Right lobe of liver (tissue), 6 donors: ENCODE measurements at regions of chr2 and their contacts with region 1.

Region 1: GRCh38 chr2:20642055-20642971 is 8.6 kb downstream of the HS1BP3 start:
- DNase-seq: peak; percentile 79 to 81 (median 80)
- ATAC-seq: peak; percentile 92 to 94 (median 94)
- H3K4me3 ChIP-seq: no peak overlapping the region
- H3K27ac ChIP-seq: no peak overlapping the region
- H3K4me1 ChIP-seq: peaks cover 0 to 5% (median 1%) of the 10 kb centered on the region in 4 donors
- H3K27me3 ChIP-seq: no peaks in the 10 kb centered on the region
- CTCF ChIP-seq: peak; percentile 91 to 96 (median 94)
- POLR2A ChIP-seq: no peak

Region 2: DNA sequence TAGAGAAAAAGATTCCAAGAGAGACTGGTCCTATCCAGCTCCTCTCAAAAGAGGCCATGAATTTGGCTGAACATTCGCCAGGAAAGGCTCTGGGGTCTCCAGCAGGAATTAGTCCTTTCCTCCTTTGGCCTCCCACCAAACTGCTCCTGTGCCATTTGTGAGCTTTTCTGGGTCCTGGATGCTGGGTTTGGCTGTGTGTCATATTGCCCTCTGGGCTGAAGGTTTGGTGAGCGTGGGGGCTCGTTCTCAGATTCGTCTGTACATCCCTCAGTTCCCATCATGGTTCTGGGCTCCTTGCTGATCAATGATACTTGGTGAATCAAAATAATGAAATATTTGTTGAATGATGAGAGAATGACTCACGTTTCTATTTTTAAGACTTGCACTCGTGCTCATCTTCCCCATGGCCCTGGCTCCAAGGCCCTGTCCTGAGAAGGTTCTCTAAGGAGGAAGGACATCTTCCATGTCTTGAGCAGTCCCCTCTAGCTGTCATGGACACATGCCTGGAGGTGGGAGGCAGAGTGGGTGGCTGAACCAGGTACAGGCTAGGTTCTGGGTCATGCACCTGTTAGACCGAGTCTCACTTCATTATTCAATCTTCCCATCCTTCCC is 243.3 kb before region 1 on chr2:
- intact Hi-C with region 1: loop called in 1 of 2 experiments (anchors 5 kb)
- DNase-seq: peak in 1 of 3 donors; percentile 24
- ATAC-seq: no peak
- H3K4me3 ChIP-seq: no peak overlapping the region
- H3K27ac ChIP-seq: no peak overlapping the region
- H3K4me1 ChIP-seq: peaks cover 0 to 9% (median 3%) of the 10 kb centered on the region in 4 donors
- H3K27me3 ChIP-seq: no peaks in the 10 kb centered on the region
- CTCF ChIP-seq: no peak
- POLR2A ChIP-seq: no peak

Region 3: DNA sequence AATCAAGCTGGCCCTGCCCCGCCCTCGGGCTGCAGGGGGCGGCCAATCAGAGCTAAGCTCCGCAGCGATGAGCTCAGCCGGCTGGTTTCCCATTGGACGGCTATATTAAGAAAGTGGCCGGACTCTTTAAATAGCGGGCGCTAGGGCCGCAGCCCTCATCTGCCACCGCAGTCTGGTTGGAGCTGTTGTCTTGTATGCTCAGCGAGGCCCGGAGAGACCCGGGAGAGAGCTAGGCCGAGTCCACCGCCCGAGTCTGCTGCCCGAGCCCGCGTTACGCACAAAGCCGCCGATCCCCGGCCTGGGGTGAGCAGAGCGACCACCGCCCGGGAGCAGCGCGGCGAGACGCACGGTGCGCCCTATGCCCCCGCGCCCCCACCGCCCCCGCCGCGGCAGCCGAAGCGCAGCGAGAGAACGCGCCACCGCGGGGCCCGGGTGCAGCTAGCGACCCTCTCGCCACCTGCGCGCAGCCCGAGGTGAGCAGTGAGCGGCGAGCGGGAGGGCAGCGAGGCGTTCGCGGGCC is 195.3 kb before region 1 on chr2 and contains the start of gene RHOB:
- intact Hi-C with region 1: loop called in 1 of 2 experiments (anchors 5 kb)
- DNase-seq: peak; percentile 98 to 99 (median 98)
- ATAC-seq: peak; percentile 76 to 86 (median 78)
- H3K4me3 ChIP-seq: peak within 1 kb of the TSS; percentile 67 to 99 (median 90)
- H3K27ac ChIP-seq: peak within 1 kb of the TSS; percentile 98 to 100 (median 99)
- H3K4me1 ChIP-seq: peaks cover 0 to 42% (median 5%) of the 10 kb centered on the region in 4 donors
- H3K27me3 ChIP-seq: no peaks in the 10 kb centered on the region
- CTCF ChIP-seq: no peak
- POLR2A ChIP-seq: peak; percentile 100
- total RNA-seq, gene RHOB: 185 to 656 (median 388) TPM

Region 4: GRCh38 chr2:20466417-20466911 is 175.8 kb before region 1 on chr2:
- intact Hi-C with region 1: no loop called
- DNase-seq: no peak
- ATAC-seq: peak in 2 of 4 donors; percentile 19 to 24
- H3K4me3 ChIP-seq: no peak overlapping the region
- H3K27ac ChIP-seq: no peak overlapping the region
- H3K4me1 ChIP-seq: peaks cover 0 to 12% (median 4%) of the 10 kb centered on the region in 4 donors
- H3K27me3 ChIP-seq: no peaks in the 10 kb centered on the region
- CTCF ChIP-seq: no peak
- POLR2A ChIP-seq: no peak

Region 5: GRCh38 chr2:20507166-20507692 is 135.1 kb before region 1 on chr2:
- intact Hi-C with region 1: no loop called
- DNase-seq: no peak
- ATAC-seq: peak in 1 of 4 donors; percentile 13
- H3K4me3 ChIP-seq: no peak overlapping the region
- H3K27ac ChIP-seq: no peak overlapping the region
- H3K4me1 ChIP-seq: no peaks in the 10 kb centered on the region
- H3K27me3 ChIP-seq: no peaks in the 10 kb centered on the region
- CTCF ChIP-seq: no peak
- POLR2A ChIP-seq: no peak

Region 6: DNA sequence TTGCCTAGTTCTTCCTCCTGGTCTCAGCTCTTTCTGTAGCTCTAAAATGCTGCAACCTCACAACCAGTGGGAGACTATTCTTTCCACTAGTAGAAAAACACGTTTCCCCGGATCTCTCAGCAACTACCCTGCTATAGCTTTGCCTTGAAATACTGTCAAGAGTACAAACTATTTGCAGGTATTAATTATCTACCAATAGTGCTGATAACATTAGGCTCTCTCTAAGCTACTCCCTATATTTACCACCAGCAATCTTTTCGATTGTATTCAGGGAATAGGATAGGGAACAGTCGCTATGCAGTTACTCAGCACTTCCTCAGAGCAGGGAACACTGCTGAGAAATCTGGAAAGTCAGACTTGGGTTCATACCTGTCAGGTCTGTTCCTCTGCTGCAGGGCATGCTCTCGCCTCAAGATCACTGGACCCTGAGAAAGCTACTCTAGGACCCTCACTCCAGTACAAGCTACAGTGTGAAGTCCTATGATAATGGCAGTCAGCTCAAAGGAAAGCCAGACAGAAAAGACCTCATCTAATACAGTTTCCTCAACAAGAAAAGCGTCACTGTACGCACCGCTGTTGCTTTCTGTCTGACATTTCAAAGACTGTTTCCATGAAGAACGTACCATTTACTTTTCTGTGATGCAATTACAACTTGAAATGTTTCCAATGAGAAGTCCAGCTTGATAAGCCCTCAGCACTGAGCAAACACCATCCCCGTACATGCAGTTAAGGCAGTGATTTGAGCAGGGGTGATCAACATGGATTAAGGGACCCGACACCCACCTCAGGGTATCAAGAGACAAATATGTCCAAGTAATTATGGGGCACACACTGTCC is 47.3 kb after region 1 on chr2:
- intact Hi-C with region 1: no loop called
- DNase-seq: peak in 1 of 3 donors; percentile 60
- ATAC-seq: peak; percentile 81 to 88 (median 88)
- H3K4me3 ChIP-seq: peak overlapping the region in 1 of 3 donors; percentile 20
- H3K27ac ChIP-seq: peak overlapping the region in 2 of 3 donors; percentile 84 to 94
- H3K4me1 ChIP-seq: peaks cover 0 to 30% (median 13%) of the 10 kb centered on the region in 4 donors
- H3K27me3 ChIP-seq: no peaks in the 10 kb centered on the region
- CTCF ChIP-seq: no peak
- POLR2A ChIP-seq: no peak

Region 7: GRCh38 chr2:20755132-20755800 is 113.0 kb after region 1 on chr2:
- intact Hi-C with region 1: no loop called
- DNase-seq: no peak
- ATAC-seq: peak in 3 of 4 donors; percentile 29 to 38 (median 38)
- H3K4me3 ChIP-seq: no peak overlapping the region
- H3K27ac ChIP-seq: no peak overlapping the region
- H3K4me1 ChIP-seq: peaks cover 0 to 7% (median 2%) of the 10 kb centered on the region in 4 donors
- H3K27me3 ChIP-seq: no peaks in the 10 kb centered on the region
- CTCF ChIP-seq: peak; percentile 23 to 26 (median 25)
- POLR2A ChIP-seq: no peak